Prostate gland (tissue), 2 donors: ENCODE measurements at regions of chr10 and their contacts with region 1.

Region 1: DNA sequence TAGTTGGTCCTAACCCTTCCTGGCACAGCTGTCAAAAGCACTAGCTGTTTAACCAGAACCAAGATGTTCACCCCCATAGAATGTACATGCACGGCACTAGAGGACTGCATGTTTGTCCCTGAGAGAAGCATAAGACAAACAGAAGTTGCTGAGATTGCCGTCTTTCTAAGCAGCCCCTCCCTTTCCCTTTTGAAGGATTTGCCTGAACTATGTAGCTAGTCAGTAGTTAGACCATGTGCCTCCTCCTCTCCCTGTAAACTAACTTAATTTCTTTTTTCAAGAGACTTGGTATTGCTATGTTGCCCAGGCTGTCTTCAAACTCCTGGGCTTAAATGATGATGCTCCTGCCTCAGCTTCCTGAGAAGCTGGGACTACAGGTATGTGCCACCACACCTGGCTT is 40.7 kb downstream of the TBC1D12 start:
- DNase-seq: no peak
- H3K4me3 ChIP-seq: no peak overlapping the region
- H3K27ac ChIP-seq: no peak overlapping the region
- H3K4me1 ChIP-seq: no peaks in the 10 kb centered on the region
- H3K27me3 ChIP-seq: no peaks in the 10 kb centered on the region
- CTCF ChIP-seq: no peak
- POLR2A ChIP-seq: no peak

Region 2: DNA sequence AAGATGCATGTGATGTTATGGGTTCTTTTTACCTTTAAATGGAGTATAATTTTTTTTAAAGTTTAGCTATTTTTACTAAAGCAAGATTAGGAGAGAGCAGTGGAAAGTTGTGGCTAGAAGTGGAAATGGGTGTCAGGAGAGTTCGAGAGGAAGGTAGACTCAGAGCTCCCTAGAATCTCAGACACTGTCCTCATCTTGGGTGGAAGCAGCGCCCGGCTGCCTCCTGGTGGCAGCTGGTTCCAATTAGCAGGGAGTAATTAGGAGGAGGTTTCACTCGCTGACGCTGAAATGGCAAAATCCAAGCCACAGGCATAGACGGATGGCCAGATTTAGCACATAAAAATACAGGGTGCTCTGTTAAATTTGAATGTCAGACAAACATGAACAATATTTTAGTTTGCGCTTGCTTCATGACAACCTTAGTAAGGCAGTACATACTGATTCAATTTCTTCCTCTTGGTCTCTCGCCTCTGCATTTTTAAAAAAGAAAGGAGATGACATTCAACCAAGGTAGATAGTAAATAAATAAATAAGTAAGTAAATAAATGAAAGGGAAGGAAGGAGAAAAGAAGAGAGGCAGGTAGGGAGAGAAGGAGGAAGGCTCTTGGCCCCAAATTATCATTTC is 626.8 kb before region 1 on chr10:
- intact Hi-C with region 1: loop called (anchors 5 kb)
- DNase-seq: peak; percentile 51
- H3K4me3 ChIP-seq: no peak overlapping the region
- H3K27ac ChIP-seq: no peak overlapping the region
- H3K4me1 ChIP-seq: no peaks in the 10 kb centered on the region
- H3K27me3 ChIP-seq: no peaks in the 10 kb centered on the region
- CTCF ChIP-seq: peak; percentile 26 to 76 (median 62)
- POLR2A ChIP-seq: no peak

Region 3: DNA sequence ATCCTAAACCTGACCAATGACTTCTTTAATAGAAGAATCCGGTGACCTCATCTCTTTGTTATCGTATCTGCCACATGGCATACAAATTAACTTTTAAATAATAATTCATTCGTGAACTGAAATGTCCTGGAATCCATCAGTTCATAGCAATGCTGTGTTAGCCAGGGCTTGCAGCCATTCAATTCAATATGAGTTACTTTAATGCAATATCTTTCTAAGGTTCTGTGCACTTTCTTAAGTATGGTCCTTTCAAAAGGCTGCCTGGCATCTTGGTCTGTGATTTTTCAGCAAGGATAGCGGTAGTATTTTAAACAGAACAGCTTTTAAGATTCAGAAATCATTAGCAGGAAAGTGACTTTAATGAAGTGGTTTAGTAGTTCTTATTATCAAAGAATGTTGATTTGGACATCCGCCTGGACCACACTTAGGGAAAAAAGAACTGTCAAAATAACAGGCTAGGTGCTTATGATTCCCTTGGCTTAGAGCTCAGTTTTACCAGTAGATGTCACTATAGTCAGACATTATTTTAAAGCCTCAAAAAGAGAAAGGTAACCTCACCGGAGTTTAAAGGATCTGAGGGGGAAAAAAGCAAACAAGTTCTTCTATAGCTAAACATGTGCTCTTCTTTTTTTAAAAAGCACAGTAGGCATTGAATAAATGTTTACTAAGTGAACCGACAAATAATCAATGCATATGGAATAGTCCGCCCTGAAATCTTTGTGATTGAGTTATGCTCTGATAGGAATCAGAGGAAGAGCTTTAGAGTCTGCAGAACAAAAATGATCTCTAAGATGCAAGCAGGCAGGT is 526.6 kb before region 1 on chr10:
- intact Hi-C with region 1: loop called (anchors 5 kb)
- DNase-seq: no peak
- H3K4me3 ChIP-seq: no peak overlapping the region
- H3K27ac ChIP-seq: no peak overlapping the region
- H3K4me1 ChIP-seq: no peaks in the 10 kb centered on the region
- H3K27me3 ChIP-seq: no peaks in the 10 kb centered on the region
- CTCF ChIP-seq: peak in 3 of 4 experiments; percentile 42 to 69 (median 62)
- POLR2A ChIP-seq: no peak

Region 4: DNA sequence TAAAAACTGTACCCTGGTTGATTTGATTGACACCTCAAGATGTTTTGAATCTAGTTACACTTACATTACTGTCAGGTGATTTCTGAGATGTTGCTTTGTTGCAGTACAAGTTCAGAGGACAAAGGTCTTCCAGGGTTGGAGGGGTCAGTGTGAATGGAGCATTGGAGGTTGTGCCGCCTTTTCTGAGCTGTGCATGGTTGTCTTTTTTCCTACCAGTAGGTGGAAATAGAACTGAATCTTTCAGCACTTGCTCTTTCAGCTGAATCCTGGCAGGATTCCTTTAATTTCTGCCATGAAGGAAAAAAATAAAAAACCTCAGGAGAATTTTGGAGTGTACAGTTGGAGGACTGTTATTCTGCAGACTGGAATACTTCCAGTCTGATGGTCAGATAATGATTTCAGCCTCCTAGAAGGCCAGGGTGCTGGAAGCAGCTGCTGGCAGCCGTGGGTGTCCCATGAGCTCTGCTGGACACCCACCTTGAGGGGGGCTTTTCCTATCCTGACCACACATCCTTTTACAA is 366.7 kb before region 1 on chr10:
- intact Hi-C with region 1: loop called (anchors 10 kb)
- DNase-seq: no peak
- H3K4me3 ChIP-seq: no peak overlapping the region
- H3K27ac ChIP-seq: no peak overlapping the region
- H3K4me1 ChIP-seq: peaks cover 9% of the 10 kb centered on the region
- H3K27me3 ChIP-seq: no peaks in the 10 kb centered on the region
- CTCF ChIP-seq: peak in 2 of 4 experiments; percentile 24 to 49
- POLR2A ChIP-seq: no peak

Region 5: DNA sequence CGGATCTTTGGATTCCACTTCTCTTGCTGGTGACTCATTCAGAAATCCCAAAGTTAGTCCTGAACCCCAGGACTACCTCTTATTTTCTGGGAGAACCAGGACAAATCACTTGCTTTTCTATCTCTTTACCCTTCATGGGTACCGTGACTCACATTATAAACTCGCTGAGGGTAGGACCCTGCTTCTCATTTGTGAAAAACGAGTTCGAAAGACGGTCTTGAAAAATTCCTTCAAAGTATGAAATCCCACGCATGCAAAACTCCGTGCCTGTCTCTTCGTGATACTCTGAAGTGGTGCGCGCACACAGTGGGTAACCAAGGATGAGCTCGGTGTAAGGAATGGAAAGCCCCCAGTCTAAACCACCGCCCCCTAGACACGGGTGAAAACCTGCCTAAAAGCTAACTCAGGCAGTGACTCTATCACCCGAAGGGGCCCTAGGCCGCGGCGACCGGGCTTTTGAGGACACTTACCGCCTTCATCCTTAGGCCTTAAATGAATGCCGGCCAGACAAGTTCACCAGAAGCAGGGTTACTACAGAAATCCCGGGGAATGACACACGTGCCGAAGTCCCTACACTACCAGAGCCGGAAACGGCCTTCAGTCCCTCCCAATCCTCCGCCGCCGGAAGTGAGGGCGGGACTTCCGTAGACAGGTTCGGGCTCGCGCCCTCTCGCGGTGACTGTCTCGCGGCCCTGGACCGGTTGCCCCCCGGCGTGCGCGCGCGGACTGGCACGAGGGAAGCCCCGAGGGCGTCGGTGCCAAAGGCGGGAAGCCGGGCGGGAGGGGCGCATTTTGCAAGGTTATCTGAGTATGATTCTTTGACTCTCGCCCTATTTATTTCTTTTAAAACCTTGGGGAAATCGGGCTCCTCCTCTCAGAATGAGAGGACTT is 80.4 kb before region 1 on chr10 and contains the start of gene NOC3L:
- intact Hi-C with region 1: loop called (anchors 10 kb)
- DNase-seq: peak; percentile 93
- H3K4me3 ChIP-seq: peak within 1 kb of the TSS; percentile 37 to 58
- H3K27ac ChIP-seq: peak within 1 kb of the TSS; percentile 18 to 39
- H3K4me1 ChIP-seq: no peaks in the 10 kb centered on the region
- H3K27me3 ChIP-seq: no peaks in the 10 kb centered on the region
- CTCF ChIP-seq: peak; percentile 84 to 96 (median 86)
- POLR2A ChIP-seq: peak; percentile 16
- total RNA-seq, gene NOC3L: 15.6 to 15.8 TPM

Region 6: GRCh38 chr10:94524146-94524545 is 81.1 kb after region 1 on chr10:
- intact Hi-C with region 1: no loop called
- DNase-seq: no peak
- H3K4me3 ChIP-seq: no peak overlapping the region
- H3K27ac ChIP-seq: no peak overlapping the region
- H3K4me1 ChIP-seq: no peaks in the 10 kb centered on the region
- H3K27me3 ChIP-seq: no peaks in the 10 kb centered on the region
- CTCF ChIP-seq: no peak
- POLR2A ChIP-seq: no peak